ENCODE measurements at regions of chr4 and their contacts with region 1.

Region 1: DNA sequence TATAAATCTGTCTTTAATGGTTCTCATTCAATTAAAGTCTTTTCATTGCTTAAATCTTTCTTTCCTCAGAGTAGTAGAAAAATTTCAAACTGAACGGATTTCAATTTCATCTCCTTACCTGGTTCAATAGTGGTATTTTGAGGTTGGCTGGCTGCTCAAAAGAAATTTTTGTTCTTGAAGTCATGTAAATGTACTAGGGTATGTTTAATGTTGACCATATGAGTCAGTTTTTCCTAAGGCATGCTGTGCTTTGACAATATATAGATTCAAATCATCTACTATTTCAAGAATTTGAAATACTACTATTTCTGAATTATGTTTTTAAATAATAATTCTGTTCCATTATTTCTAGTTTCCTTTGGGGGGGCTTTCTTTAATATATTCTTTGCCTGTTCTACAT is 105.5 kb downstream of the PACRGL start:
- DNase-seq: no peak
- H3K4me3 ChIP-seq: no peak overlapping the region
- H3K27ac ChIP-seq: no peak overlapping the region
- H3K4me1 ChIP-seq: no peaks in the 10 kb centered on the region
- H3K27me3 ChIP-seq: peaks cover 6% of the 10 kb centered on the region
- CTCF ChIP-seq: no peak

Region 2: DNA sequence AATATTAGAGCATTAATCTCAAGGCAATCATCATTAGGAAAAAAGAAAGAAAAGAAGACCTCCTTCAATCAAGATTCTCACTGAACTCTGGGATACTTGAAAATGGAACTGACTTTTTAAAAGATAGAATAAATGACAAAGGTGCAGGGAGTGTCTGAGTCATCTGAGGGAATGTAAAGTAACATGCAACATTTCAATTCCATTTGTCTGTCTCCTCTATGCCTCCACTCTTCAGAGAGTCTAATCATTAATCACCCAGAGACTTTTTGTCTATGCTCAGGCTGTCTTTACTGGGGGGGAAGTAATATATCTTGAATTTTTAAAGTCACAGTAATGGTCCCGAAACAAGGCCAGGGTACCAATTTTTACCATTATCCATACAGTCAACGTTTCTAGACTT is 160.5 kb before region 1 on chr4:
- CTCF ChIA-PET with region 1: no interaction called
- POLR2A ChIA-PET with region 1: no interaction called
- intact Hi-C with region 1: no loop called
- DNase-seq: no peak
- H3K4me3 ChIP-seq: no peak overlapping the region
- H3K27ac ChIP-seq: no peak overlapping the region
- H3K4me1 ChIP-seq: no peaks in the 10 kb centered on the region
- H3K27me3 ChIP-seq: no peaks in the 10 kb centered on the region
- CTCF ChIP-seq: no peak

Region 3: DNA sequence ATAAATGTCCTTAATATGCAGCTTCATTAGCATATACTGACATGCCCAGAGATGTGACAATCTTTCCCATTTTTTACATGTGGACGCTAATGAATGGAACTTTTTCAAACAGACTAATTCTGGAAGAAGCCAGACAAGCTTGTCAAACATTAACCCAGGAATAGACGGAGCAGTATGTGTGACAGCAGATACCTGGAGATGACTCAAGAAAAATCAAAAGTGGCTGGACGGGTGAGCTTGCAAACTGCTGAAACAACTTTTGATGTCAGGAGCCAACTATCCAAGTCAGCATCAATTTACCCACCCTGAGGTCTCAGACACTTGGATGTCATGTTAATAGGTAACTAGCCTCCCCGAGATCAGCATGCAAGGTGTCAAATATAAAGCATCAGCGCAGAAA is 77.5 kb after region 1 on chr4:
- CTCF ChIA-PET with region 1: no interaction called
- POLR2A ChIA-PET with region 1: interaction called, 18 read pairs
- intact Hi-C with region 1: no loop called
- DNase-seq: no peak
- H3K4me3 ChIP-seq: no peak overlapping the region
- H3K27ac ChIP-seq: no peak overlapping the region
- H3K4me1 ChIP-seq: no peaks in the 10 kb centered on the region
- H3K27me3 ChIP-seq: peaks cover 33% of the 10 kb centered on the region
- CTCF ChIP-seq: no peak

Region 4: GRCh38 chr4:21013501-21013900 is 207.8 kb after region 1 on chr4:
- CTCF ChIA-PET with region 1: no interaction called
- POLR2A ChIA-PET with region 1: no interaction called
- intact Hi-C with region 1: no loop called
- DNase-seq: no peak
- H3K4me3 ChIP-seq: no peak overlapping the region
- H3K27ac ChIP-seq: no peak overlapping the region
- H3K4me1 ChIP-seq: no peaks in the 10 kb centered on the region
- H3K27me3 ChIP-seq: no peaks in the 10 kb centered on the region
- CTCF ChIP-seq: no peak

Measured in A673 (cell line).